ENCODE measurements at regions of chr3 and their contacts with region 1.

Region 1: GRCh38 chr3:69306239-69307185 is 79.4 kb downstream of the FRMD4B start:
- DNase-seq: peak; percentile 68 to 74
- H3K4me3 ChIP-seq: no peak overlapping the region
- H3K4me1 ChIP-seq: no peaks in the 10 kb centered on the region
- H3K27me3 ChIP-seq: no peaks in the 10 kb centered on the region

Region 2: GRCh38 chr3:68988740-68989139 is 317.8 kb before region 1 on chr3:
- in situ Hi-C with region 1: no loop called
- DNase-seq: no peak
- H3K4me3 ChIP-seq: no peak overlapping the region
- H3K4me1 ChIP-seq: no peaks in the 10 kb centered on the region
- H3K27me3 ChIP-seq: no peaks in the 10 kb centered on the region

Region 3: GRCh38 chr3:69084326-69085167 is 222.0 kb before region 1 on chr3 and contains the start of gene ARL6IP5:
- in situ Hi-C with region 1: no loop called
- DNase-seq: peak; percentile 92 to 95
- H3K4me3 ChIP-seq: peak within 1 kb of the TSS; percentile 62
- H3K4me1 ChIP-seq: peaks cover 32% of the 10 kb centered on the region
- H3K27me3 ChIP-seq: no peaks in the 10 kb centered on the region

Region 4: GRCh38 chr3:69389520-69390248 is 83.2 kb after region 1 on chr3:
- in situ Hi-C with region 1: no loop called
- DNase-seq: no peak
- H3K4me3 ChIP-seq: no peak overlapping the region
- H3K4me1 ChIP-seq: peaks cover 6% of the 10 kb centered on the region; the same call in 1 of the 2 replicates
- H3K27me3 ChIP-seq: no peaks in the 10 kb centered on the region

Region 5: GRCh38 chr3:69948246-69948862 is 641.8 kb after region 1 on chr3:
- in situ Hi-C with region 1: loop called (anchors 25 kb)
- DNase-seq: peak; percentile 12 to 36
- H3K4me3 ChIP-seq: no peak overlapping the region
- H3K4me1 ChIP-seq: peaks cover 3% of the 10 kb centered on the region; the same call in 1 of the 2 replicates
- H3K27me3 ChIP-seq: no peaks in the 10 kb centered on the region

Measured in HAP-1 (cell line).